HCT116 (cell line): ENCODE measurements at regions of chrX and their contacts with region 1.

Region 1: GRCh38 chrX:43349363-43349762 is 306.7 kb upstream of the MAOA start:
- DNase-seq: peak; percentile 28
- ATAC-seq: peak; percentile 81
- H3K4me3 ChIP-seq: no peak overlapping the region
- H3K27ac ChIP-seq: no peak overlapping the region
- H3K4me1 ChIP-seq: no peaks in the 10 kb centered on the region
- H3K27me3 ChIP-seq: no peaks in the 10 kb centered on the region
- CTCF ChIP-seq: peak; percentile 33 to 69 (median 64); a peak in 5 of 6 replicates
- POLR2A ChIP-seq: no peak
- RAD21 ChIP-seq: peak; percentile 58

Region 2: GRCh38 chrX:43025806-43026205 is 323.6 kb before region 1 on chrX:
- CTCF ChIA-PET with region 1: no interaction called
- POLR2A ChIA-PET with region 1: no interaction called
- RAD21 ChIA-PET with region 1: no interaction called
- intact Hi-C with region 1: no loop called
- DNase-seq: no peak
- ATAC-seq: no peak
- H3K4me3 ChIP-seq: no peak overlapping the region
- H3K27ac ChIP-seq: no peak overlapping the region
- H3K4me1 ChIP-seq: no peaks in the 10 kb centered on the region
- H3K27me3 ChIP-seq: no peaks in the 10 kb centered on the region
- CTCF ChIP-seq: no peak
- POLR2A ChIP-seq: no peak
- RAD21 ChIP-seq: no peak

Region 3: GRCh38 chrX:43328358-43328946 is 20.9 kb before region 1 on chrX:
- CTCF ChIA-PET with region 1: no interaction called
- POLR2A ChIA-PET with region 1: no interaction called
- RAD21 ChIA-PET with region 1: no interaction called
- intact Hi-C with region 1: no loop called
- DNase-seq: no peak
- ATAC-seq: no peak
- H3K4me3 ChIP-seq: no peak overlapping the region
- H3K27ac ChIP-seq: no peak overlapping the region
- H3K4me1 ChIP-seq: no peaks in the 10 kb centered on the region
- H3K27me3 ChIP-seq: no peaks in the 10 kb centered on the region
- CTCF ChIP-seq: no peak
- POLR2A ChIP-seq: no peak
- RAD21 ChIP-seq: no peak

Region 4: DNA sequence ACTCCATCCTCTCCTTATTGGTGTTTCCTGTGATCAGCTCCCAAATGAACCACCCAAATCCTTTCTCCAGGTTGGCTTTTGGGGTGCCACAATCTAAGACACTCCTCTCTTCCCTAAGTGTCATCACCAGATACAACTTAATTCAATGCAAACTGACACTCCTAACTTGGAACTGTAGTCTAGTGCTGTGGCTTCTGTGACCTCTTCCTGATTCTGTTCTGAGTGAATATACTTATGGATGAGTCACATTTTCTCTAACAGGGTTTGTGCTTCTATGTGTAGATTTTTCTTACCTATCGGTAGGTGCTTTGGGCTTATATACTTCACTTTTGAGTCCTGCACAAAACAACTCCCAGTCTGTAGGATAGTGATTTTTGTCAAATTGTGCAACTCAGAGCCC is 165.5 kb after region 1 on chrX:
- CTCF ChIA-PET with region 1: no interaction called
- POLR2A ChIA-PET with region 1: no interaction called
- RAD21 ChIA-PET with region 1: no interaction called
- intact Hi-C with region 1: no loop called
- DNase-seq: no peak
- ATAC-seq: no peak
- H3K4me3 ChIP-seq: no peak overlapping the region
- H3K27ac ChIP-seq: no peak overlapping the region
- H3K4me1 ChIP-seq: no peaks in the 10 kb centered on the region
- H3K27me3 ChIP-seq: no peaks in the 10 kb centered on the region
- CTCF ChIP-seq: no peak
- POLR2A ChIP-seq: no peak
- RAD21 ChIP-seq: no peak

Region 5: DNA sequence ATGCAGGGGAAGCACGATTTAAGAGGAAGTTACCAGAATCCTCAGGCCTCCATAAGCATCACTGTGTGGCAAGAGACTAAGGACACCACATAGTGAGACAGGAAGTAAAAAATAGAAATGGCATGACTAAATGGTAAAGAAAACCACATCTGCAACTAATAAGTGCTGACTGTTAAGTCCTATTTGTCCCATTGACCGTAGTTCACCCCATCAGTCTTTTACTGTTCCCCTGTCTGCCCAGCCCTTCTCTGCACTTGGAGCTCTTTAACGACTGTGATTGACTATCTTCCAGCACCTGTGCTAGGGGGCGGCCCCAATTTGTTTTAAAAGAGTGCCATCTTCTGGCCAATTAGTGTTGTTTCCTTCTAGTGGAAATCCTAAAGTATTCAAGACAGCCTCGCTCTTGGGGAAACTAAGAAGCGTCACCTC is 400.9 kb after region 1 on chrX:
- CTCF ChIA-PET with region 1: no interaction called
- POLR2A ChIA-PET with region 1: no interaction called
- RAD21 ChIA-PET with region 1: no interaction called
- intact Hi-C with region 1: loop called (anchors 2 kb)
- DNase-seq: peak; percentile 31
- ATAC-seq: peak; percentile 86
- H3K4me3 ChIP-seq: no peak overlapping the region
- H3K27ac ChIP-seq: no peak overlapping the region
- H3K4me1 ChIP-seq: no peaks in the 10 kb centered on the region
- H3K27me3 ChIP-seq: no peaks in the 10 kb centered on the region
- CTCF ChIP-seq: peak; percentile 25 to 70 (median 55); a peak in 3 of 6 replicates
- POLR2A ChIP-seq: no peak
- RAD21 ChIP-seq: peak; percentile 81

Region 6: DNA sequence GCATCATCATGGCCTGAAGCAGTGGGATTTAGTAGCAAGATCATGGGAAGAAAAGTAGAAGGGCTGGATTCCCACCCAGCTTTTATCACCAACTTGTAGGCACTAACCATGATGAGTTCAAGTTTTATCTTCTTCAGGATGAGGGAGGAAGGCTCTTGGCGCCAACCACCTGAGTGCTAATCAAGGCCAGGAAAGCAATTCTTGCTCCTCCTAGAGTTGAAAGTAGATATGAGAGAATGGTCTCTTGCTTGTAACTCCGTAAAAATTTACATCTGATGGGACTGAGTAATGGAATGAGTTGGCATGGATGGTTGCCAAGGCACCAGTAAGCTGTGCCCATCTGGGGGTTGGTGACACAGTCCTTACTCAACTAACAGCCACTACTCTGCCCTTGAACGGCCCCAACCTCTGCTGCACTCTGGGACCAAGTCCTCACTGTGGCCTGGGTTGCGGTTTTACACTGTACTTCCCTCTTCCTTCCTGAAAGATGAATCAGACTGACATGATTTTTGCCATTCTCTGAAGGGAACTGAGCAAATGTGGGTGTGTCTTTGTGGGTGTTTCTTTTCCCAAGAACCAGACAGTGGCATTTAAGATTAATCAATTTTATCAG is 663.2 kb after region 1 on chrX:
- CTCF ChIA-PET with region 1: no interaction called
- POLR2A ChIA-PET with region 1: no interaction called
- RAD21 ChIA-PET with region 1: no interaction called
- intact Hi-C with region 1: no loop called
- DNase-seq: peak; percentile 68
- ATAC-seq: peak; percentile 97
- H3K4me3 ChIP-seq: no peak overlapping the region
- H3K27ac ChIP-seq: no peak overlapping the region
- H3K4me1 ChIP-seq: peaks cover 0 to 13% of the 10 kb centered on the region in 2 experiments; a peak in 2 of 4 replicates
- H3K27me3 ChIP-seq: no peaks in the 10 kb centered on the region
- CTCF ChIP-seq: 0 out of 6 replicates have a peak, but pooled peaks of 1 of the 3 experiments have one; percentile 11
- POLR2A ChIP-seq: no peak
- RAD21 ChIP-seq: peak; percentile 37; the same call in 1 of the 2 replicates